ENCODE measurements at regions of chr7 and their contacts with region 1.

Region 1: DNA sequence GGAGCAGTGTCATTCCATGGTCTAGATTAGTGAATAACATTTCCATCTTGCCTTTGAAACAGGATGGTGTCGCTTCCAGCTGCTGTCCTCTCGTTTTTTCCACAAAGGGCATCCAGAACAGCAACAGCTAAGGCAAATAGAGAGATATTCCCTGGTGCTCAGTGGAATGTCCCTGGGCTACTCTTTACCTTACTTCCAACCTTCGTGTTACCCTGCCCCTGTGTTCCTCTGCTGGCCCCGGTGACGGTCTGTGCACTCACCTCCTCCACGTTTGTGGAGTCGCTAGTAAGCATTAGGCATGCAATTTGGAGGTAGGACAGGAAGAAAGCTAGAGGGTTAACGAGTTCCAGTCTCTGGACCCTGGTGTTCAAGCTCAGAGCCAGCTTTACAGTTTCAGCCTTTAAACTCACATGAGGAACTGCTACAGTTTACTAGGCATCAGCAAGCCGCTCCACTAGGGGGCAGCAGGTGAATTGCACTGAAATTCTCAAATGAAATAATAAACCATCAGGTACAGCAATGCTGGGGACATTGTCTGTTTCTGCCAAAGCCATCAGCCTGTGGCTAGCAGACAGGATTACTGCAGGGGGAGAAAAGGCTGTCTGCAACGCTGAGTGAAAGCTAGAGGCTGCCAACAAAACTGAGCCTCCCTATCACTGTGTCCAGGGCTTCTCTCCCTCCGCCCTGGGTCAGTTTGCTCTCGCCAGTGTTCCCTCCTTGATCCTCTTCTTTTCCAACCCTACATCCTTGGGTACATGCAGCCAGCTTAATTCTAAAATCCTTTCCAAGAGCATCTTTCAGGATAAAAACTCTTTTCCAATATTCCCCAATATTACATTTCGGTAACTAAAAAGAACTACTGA is 9.0 kb downstream of the MRPL32 start:
- DNase-seq: peak; percentile 47 to 89 (median 62)
- ATAC-seq: peak; percentile 76
- H3K4me3 ChIP-seq: no peak overlapping the region
- H3K27ac ChIP-seq: no peak overlapping the region; the same call in 2 of the 3 replicates
- H3K4me1 ChIP-seq: peaks cover 4 to 13% of the 10 kb centered on the region in 2 experiments; a peak in 4 of 5 replicates
- H3K27me3 ChIP-seq: no peaks in the 10 kb centered on the region
- CTCF ChIP-seq: peak; percentile 85 to 94 (median 89)
- EP300 ChIP-seq: no peak; the same call in 1 of the 2 replicates
- POLR2A ChIP-seq: 0 out of 2 replicates have a peak, but pooled peaks have one; percentile 15
- RAD21 ChIP-seq: peak; percentile 85 to 95

Region 2: DNA sequence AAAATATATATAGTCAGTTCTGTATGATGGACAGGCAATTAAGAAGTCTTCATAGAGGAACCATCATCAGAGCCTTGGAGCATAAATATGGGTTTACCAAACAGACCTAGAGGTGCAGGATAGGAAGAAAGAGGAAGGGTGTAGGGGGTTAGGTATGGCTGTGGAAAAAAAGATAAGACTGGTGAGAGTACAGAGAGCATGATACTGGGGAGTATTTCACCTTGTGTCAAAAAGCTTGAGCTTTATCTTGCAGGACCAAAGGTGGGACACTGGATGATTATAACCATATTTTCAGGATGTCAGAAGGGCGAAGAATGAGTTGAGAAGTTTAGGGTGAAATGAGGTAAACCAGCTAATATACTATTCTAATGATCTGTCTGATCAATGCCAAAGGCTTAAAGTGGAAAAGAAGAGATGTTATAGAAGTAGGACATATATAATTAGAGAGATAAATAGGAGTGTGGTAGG is 45.6 kb after region 1 on chr7:
- CTCF ChIA-PET with region 1: no interaction called
- POLR2A ChIA-PET with region 1: no interaction called
- in situ Hi-C with region 1: no loop called
- intact Hi-C with region 1: loop called (anchors 1 kb)
- DNase-seq: peak; percentile 76 to 90 (median 82)
- ATAC-seq: peak; percentile 97
- H3K4me3 ChIP-seq: no peak overlapping the region
- H3K27ac ChIP-seq: peak overlapping the region; percentile 66
- H3K4me1 ChIP-seq: peaks cover 5 to 29% of the 10 kb centered on the region in 2 experiments
- H3K27me3 ChIP-seq: no peaks in the 10 kb centered on the region
- CTCF ChIP-seq: no peak
- EP300 ChIP-seq: peak; percentile 97
- POLR2A ChIP-seq: no peak
- RAD21 ChIP-seq: no peak

Region 3: GRCh38 chr7:43058271-43059066 is 117.3 kb after region 1 on chr7:
- CTCF ChIA-PET with region 1: no interaction called
- POLR2A ChIA-PET with region 1: no interaction called
- in situ Hi-C with region 1: no loop called
- intact Hi-C with region 1: loop called (anchors 5 kb)
- DNase-seq: peak in 2 of 4 experiments; percentile 28 to 34
- ATAC-seq: peak; percentile 82
- H3K4me3 ChIP-seq: peak overlapping the region; percentile 46
- H3K27ac ChIP-seq: peak overlapping the region; percentile 93
- H3K4me1 ChIP-seq: peaks cover 7 to 10% of the 10 kb centered on the region in 2 experiments; a peak in 4 of 5 replicates
- H3K27me3 ChIP-seq: no peaks in the 10 kb centered on the region
- CTCF ChIP-seq: no peak
- EP300 ChIP-seq: no peak
- POLR2A ChIP-seq: no peak
- RAD21 ChIP-seq: no peak

Region 4: DNA sequence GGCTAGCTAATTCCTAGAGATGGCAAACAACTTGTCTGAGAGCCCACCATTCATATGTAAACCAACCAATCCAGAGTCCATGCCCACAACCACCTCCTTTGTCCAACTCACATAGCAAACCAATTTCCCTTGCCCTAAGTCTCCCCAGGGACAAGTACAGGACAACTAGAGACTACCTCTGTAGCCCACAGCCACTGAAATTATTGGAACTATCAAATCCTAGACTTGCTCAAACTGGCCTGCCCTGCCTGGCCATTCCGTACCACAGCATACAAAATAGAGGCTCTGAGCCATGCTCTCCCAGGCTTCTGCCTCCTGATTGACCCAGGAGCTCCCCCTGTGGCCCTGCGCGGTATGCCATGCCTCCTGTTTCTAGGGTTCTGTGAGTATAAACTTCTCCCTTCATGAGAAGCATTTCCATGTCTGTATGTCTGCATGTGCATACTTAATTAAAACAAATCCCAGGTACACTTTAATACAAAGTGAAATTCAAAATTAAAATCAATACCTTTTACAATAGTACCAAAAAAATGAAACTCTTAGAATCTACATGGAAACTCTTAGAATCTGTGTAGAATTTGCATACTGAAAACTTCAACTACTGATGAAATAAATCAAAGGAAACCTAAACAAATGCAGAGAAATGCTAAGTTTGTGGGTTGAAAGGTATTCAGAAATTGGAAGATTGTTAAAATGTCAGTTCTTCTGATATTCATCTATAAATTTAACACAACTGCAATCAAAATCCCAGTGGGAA is 167.2 kb after region 1 on chr7:
- CTCF ChIA-PET with region 1: interaction called, 3 read pairs
- POLR2A ChIA-PET with region 1: interaction called, 4 read pairs
- in situ Hi-C with region 1: loop called (anchors 10 kb)
- intact Hi-C with region 1: loop called (anchors 1 kb)
- DNase-seq: peak; percentile 65 to 81 (median 72)
- ATAC-seq: peak; percentile 94
- H3K4me3 ChIP-seq: no peak overlapping the region
- H3K27ac ChIP-seq: no peak overlapping the region
- H3K4me1 ChIP-seq: peaks cover 11 to 17% of the 10 kb centered on the region in 2 experiments; a peak in 4 of 5 replicates
- H3K27me3 ChIP-seq: peaks cover 0 to 4% of the 10 kb centered on the region in 2 experiments; a peak in 2 of 5 replicates
- CTCF ChIP-seq: peak; percentile 88 to 93 (median 88)
- EP300 ChIP-seq: no peak
- POLR2A ChIP-seq: no peak
- RAD21 ChIP-seq: peak; percentile 37 to 75

Region 5: GRCh38 chr7:43260980-43261878 is 320.0 kb after region 1 on chr7:
- CTCF ChIA-PET with region 1: interaction called, 10 read pairs
- POLR2A ChIA-PET with region 1: interaction called, 3 read pairs
- in situ Hi-C with region 1: loop called (anchors 25 kb)
- intact Hi-C with region 1: loop called (anchors 1 kb)
- DNase-seq: peak; percentile 56 to 83 (median 62)
- ATAC-seq: peak; percentile 97
- H3K4me3 ChIP-seq: no peak overlapping the region
- H3K27ac ChIP-seq: no peak overlapping the region
- H3K4me1 ChIP-seq: no peaks in the 10 kb centered on the region
- H3K27me3 ChIP-seq: peaks cover 10 to 19% of the 10 kb centered on the region in 2 experiments; a peak in 4 of 5 replicates
- CTCF ChIP-seq: peak; percentile 82 to 88 (median 86)
- EP300 ChIP-seq: no peak
- POLR2A ChIP-seq: no peak
- RAD21 ChIP-seq: peak; percentile 76 to 85

Region 6: DNA sequence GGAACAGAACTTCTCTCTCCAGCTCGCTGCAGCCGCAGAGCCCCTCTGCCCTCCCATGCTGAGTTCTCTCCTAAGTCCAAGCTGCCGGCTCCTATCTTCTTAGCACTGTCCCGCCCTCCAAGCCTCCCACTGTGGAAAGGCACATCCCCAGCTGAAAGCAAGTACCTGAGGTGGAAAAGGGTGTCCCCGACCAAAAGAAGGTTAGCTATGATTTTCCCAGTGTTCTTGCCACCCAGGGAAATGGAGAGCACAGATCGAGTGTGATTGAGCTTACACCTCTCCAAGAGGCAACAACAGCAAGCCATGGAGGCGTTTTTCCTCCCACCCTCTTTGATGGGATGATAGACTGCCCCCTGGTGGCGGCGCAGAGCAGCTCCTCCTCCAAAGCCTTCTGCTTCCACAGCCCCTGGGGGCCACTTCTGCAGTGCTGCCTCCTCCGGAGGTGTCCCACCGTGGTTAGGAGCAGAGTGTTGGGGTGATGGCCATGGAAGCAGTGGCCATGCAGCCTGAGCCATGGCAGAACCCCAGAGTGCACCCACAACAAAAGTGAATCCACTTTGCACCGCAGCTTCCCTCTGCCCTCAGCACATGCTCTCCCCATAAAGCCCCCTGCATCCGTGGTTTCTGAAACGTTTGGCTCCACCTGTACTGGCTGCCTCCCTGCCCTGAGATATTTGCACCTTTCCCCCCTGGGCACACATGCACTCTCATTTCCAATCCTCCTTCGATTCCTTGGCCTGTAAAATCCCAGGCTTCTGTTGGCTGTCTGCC is 498.6 kb after region 1 on chr7:
- CTCF ChIA-PET with region 1: no interaction called
- POLR2A ChIA-PET with region 1: no interaction called
- in situ Hi-C with region 1: no loop called
- intact Hi-C with region 1: loop called (anchors 2 kb)
- DNase-seq: peak; percentile 70 to 82 (median 80)
- ATAC-seq: peak; percentile 98
- H3K4me3 ChIP-seq: no peak overlapping the region
- H3K27ac ChIP-seq: no peak overlapping the region
- H3K4me1 ChIP-seq: peaks cover 0 to 8% of the 10 kb centered on the region in 2 experiments; a peak in 1 of 5 replicates
- H3K27me3 ChIP-seq: peaks cover 19 to 20% of the 10 kb centered on the region in 2 experiments
- CTCF ChIP-seq: peak; percentile 89 to 94 (median 90)
- EP300 ChIP-seq: no peak
- POLR2A ChIP-seq: no peak
- RAD21 ChIP-seq: peak; percentile 51 to 81

Measured in K562 (cell line).